MCF 10A (cell line): ENCODE measurements at regions of chr17 and their contacts with region 1.

Region 1: DNA sequence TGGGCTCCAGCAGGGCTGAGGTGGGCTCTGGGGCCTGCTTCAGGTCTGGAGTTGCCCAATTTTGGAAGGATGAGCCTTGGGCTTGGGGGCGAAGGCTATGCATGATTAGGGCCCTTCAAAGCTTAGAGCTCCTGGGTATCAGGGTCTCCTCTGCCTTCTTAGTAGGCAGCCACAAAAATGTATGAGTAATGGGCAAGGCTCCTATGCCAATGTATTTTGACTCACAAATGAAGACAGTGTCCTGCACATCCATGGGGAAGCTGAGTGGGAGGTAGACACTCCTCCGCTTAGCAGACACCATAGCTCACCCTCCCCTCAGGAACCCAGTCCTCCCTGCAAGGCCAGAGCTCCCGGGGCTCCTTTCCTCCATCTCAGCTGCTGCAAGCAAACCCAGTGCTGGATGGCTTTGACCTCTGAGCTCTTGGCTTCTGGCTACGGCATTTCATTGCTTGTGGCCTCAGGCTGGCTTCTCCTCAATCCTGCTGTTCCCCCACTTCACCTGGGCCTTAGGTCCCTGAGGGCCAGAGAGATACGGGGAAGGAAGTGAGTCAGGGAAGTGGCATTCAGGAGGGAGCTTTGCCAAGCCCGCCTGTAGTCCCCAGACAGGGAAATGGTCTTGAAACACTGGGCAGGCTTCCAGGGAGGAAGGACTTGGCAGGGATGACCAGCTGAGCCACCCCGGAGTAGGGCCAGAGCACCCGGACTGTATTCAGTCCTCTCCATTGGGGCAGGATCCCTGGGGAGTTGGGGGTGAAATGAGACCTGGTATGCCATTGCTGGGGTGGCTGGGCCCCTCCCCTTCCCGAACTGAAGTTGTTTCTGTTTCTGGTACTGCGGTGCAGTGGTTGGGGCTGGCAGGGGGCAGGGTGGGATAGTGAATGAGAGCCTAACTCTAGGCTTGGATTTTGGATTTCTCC is 4.4 kb downstream of the ABCC3 start:
- DNase-seq: peak; percentile 100
- H3K4me3 Mint-ChIP-seq: peak overlapping the region; percentile 71
- H3K27ac Mint-ChIP-seq: peak overlapping the region; percentile 81
- H3K4me1 Mint-ChIP-seq: peaks cover 54% of the 10 kb centered on the region
- H3K27me3 Mint-ChIP-seq: no peaks in the 10 kb centered on the region
- CTCF ChIP-seq: no peak

Region 2: DNA sequence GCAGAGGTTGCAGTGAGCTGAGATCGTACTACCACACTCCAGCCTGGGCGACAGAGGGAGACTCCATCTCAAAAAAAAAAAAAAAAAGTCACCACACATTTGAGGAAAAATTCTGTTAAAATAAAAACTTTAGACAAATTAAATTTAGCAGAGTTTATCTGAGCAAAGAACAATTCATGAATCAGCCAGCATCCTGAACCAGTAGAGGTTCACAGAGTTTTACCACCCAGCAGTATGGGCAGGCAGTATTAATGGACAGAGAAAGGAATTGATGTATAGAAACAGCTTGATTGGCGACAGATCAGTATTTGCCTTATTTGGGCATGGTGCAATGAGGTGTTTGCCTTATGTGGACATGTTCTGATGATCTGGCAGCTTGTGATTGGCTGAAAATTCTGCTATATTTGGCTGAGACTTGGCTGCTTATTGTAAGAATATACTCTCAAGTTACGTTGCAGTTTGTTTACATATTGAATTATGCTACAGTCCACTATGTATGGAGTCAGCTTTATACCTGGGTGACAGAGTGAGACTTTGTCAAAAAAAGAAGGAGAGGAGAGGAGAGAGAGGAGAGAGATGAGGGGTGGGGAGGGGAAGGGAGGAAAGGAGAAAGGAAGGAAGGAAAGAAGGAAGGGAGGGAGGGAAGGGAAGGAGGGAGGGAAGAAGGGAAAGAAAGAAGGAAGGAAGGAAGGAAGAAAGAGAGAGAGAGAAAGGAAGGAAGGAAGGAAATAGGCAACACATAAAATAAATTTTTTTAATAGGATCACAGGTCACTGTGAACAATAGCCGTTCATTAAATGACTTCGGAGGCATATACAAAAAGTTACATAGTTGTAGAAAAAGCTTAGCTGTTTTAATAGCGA is 10.2 kb after region 1 on chr17:
- CTCF ChIA-PET with region 1: interaction called, 5 read pairs
- POLR2A ChIA-PET with region 1: interaction called, 38 read pairs
- intact Hi-C with region 1: no loop called
- DNase-seq: peak; percentile 77
- H3K4me3 Mint-ChIP-seq: no peak overlapping the region
- H3K27ac Mint-ChIP-seq: no peak overlapping the region
- H3K4me1 Mint-ChIP-seq: peaks cover 19% of the 10 kb centered on the region
- H3K27me3 Mint-ChIP-seq: no peaks in the 10 kb centered on the region
- CTCF ChIP-seq: no peak

Region 3: GRCh38 chr17:50661795-50662391 is 22.8 kb after region 1 on chr17:
- CTCF ChIA-PET with region 1: interaction called, 8 read pairs
- POLR2A ChIA-PET with region 1: interaction called, 96 read pairs
- intact Hi-C with region 1: loop called (anchors 1 kb)
- DNase-seq: peak; percentile 99
- H3K4me3 Mint-ChIP-seq: peak overlapping the region; percentile 47
- H3K27ac Mint-ChIP-seq: peak overlapping the region; percentile 77
- H3K4me1 Mint-ChIP-seq: peaks cover 45% of the 10 kb centered on the region
- H3K27me3 Mint-ChIP-seq: no peaks in the 10 kb centered on the region
- CTCF ChIP-seq: no peak

Region 4: GRCh38 chr17:50668025-50668837 is 29.1 kb after region 1 on chr17:
- CTCF ChIA-PET with region 1: interaction called, 6 read pairs
- POLR2A ChIA-PET with region 1: interaction called, 87 read pairs
- intact Hi-C with region 1: loop called (anchors 1 kb)
- DNase-seq: peak; percentile 58
- H3K4me3 Mint-ChIP-seq: peak overlapping the region; percentile 40
- H3K27ac Mint-ChIP-seq: peak overlapping the region; percentile 77
- H3K4me1 Mint-ChIP-seq: peaks cover 53% of the 10 kb centered on the region
- H3K27me3 Mint-ChIP-seq: no peaks in the 10 kb centered on the region
- CTCF ChIP-seq: no peak

Region 5: DNA sequence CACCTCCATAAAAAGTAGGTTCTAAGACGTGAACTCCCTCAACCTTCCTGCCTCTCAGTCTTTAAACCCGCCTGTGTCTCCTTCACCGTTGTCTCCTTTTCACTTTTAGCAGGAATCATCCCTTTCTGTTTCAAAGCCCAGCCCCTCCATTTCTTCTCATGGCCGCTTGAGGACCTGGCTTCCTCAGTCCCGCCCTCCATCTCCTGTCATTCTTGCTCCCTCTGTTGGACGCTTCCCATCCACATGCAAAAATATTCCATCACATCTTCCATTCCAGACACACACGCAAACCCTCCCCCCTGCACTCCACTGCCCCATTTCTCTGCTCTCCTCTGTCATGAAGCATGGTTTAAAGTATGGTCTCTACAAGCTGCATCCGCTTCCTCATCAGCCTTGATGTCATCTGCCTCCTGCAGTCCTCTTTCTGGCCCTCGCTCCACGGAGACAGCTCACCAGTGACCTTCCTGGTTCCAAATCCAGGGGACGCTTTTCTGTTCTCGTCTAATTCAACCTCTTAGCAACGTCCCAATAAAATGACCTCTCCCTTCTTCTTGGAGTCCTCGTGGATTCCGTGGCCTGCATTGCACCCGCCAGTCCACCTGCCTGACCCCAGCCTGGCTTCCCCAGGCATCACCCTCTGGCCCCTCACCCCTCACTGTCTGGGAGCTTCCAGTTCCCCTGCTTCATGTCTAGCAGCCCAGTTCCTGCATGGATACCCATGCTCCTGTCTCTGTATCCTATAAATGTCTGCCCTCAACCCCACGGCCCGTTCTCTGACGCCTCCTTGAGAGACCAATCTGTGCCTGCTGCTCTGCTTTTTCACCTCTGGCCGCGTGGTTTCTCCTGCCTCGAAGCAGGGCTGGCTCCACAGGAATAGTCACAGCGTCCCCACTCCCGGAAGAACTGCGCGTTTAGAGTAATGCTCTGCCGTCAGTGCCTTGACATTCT is 42.4 kb after region 1 on chr17:
- CTCF ChIA-PET with region 1: interaction called, 118 read pairs
- POLR2A ChIA-PET with region 1: interaction called, 29 read pairs
- intact Hi-C with region 1: no loop called
- DNase-seq: peak; percentile 67
- H3K4me3 Mint-ChIP-seq: no peak overlapping the region
- H3K27ac Mint-ChIP-seq: peak overlapping the region; percentile 32
- H3K4me1 Mint-ChIP-seq: peaks cover 26% of the 10 kb centered on the region
- H3K27me3 Mint-ChIP-seq: no peaks in the 10 kb centered on the region
- CTCF ChIP-seq: peak; percentile 35

Region 6: GRCh38 chr17:50686494-50687199 is 47.5 kb after region 1 on chr17:
- CTCF ChIA-PET with region 1: interaction called, 118 read pairs
- POLR2A ChIA-PET with region 1: interaction called, 29 read pairs
- intact Hi-C with region 1: no loop called
- DNase-seq: peak; percentile 96
- H3K4me3 Mint-ChIP-seq: peak overlapping the region; percentile 11
- H3K27ac Mint-ChIP-seq: peak overlapping the region; percentile 37
- H3K4me1 Mint-ChIP-seq: peaks cover 40% of the 10 kb centered on the region
- H3K27me3 Mint-ChIP-seq: no peaks in the 10 kb centered on the region
- CTCF ChIP-seq: no peak

Region 7: DNA sequence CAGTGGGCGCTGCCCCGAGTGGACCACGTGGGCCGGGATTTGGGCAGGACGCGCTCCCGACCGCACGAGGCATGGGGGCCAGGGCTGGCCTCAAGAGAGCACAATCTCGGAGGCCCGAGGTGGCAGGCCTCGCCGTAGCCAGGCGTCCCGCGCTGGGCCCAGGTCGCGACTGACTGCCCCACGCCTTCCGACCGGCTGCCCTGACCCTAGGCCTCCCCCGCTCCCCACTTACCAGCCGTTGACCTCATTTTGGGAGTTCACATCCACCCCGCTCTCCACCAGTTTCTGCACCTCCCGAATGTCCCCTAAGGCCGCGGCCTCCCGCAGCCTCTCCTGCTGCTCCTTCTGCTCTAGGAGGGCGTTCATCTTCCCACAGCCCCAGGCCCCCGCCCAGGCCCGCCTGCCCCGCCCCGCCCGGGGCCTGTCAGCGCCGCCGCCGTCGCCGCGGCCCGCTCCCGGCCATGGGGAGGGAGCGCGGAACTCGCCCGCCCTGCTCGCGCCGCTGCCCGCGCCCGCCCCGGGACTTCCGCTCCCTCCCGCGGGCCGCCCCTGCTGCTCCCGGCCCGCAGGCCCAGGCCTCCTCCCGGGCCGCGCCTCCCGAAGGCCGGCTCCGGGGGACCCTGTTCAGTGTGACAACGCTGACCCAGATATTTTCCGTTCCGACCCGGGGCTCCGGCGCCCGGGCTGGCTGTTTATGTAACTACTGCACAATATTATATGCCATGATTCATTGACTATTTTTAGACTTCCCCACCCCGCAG is 68.4 kb after region 1 on chr17 and contains the start of gene ANKRD40:
- CTCF ChIA-PET with region 1: interaction called, 6 read pairs
- POLR2A ChIA-PET with region 1: interaction called, 17 read pairs
- intact Hi-C with region 1: no loop called
- DNase-seq: peak; percentile 94
- H3K4me3 Mint-ChIP-seq: peak within 1 kb of the TSS; percentile 95
- H3K27ac Mint-ChIP-seq: peak within 1 kb of the TSS; percentile 76
- H3K4me1 Mint-ChIP-seq: peaks cover 25% of the 10 kb centered on the region
- H3K27me3 Mint-ChIP-seq: no peaks in the 10 kb centered on the region
- CTCF ChIP-seq: no peak
- total RNA-seq, gene ANKRD40: 42.2 and 46.4 TPM in 2 replicates